ENCODE measurements at regions of chr2 and their contacts with region 1.

Region 1: DNA sequence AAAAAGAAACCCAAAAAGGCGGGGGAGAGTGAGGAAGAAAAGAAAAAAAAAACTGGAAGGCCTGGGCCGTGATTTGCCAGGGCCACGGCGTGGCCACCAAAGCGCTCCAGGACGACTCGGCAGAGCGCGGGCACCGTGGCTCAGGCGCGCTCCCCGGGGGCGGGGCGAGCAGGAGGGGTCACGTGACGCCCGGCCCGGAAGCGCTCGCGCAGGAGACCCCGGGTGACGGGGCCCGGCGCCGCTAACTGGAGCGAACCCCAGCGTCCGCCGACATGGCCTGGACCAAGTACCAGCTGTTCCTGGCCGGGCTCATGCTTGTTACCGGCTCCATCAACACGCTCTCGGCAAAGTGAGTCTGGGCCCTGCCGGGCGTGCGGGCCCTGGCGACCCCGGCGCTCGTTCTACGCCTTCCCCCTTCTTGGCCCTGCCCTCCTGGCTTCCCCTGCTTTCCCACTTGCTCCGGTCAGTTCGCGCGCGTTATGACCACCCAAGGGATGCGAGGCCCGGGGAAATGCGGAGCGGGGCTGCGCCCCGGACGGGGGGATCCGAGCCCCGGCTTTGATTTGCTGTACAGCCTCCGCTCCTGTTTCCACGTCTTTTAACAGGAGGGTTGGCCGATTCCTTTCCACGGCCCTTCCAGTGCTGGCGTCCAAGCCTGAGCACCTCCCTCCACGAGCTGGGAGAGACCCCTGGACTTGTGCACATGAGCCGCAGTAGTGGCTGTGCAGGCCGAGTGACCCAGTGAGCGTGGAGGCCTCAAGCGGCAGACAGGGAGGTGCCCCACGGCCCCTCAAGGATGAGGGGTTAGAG is at the start of gene SLC35F6:
- DNase-seq: peak; percentile 79 to 85 (median 83)
- H3K4me3 ChIP-seq: peak within 1 kb of the TSS; percentile 78
- H3K4me3 Mint-ChIP-seq: peak within 1 kb of the TSS; percentile 87 to 99 (median 93)
- H3K27ac ChIP-seq: peak within 1 kb of the TSS; percentile 88
- H3K27ac Mint-ChIP-seq: peak within 1 kb of the TSS; percentile 85 to 99 (median 96)
- H3K4me1 ChIP-seq: peaks cover 25% of the 10 kb centered on the region
- H3K4me1 Mint-ChIP-seq: peaks cover 29 to 51% (median 35%) of the 10 kb centered on the region in 3 donors
- H3K27me3 ChIP-seq: no peaks in the 10 kb centered on the region
- H3K27me3 Mint-ChIP-seq: no peaks in the 10 kb centered on the region
- total RNA-seq, gene SLC35F6: 11.5 to 12.1 TPM

Region 2: GRCh38 chr2:26782876-26783704 is 18.8 kb after region 1 on chr2:
- CTCF ChIA-PET with region 1: interaction called, 3 read pairs
- POLR2A ChIA-PET with region 1: interaction called, 10 read pairs
- DNase-seq: no peak
- H3K4me3 ChIP-seq: no peak overlapping the region
- H3K4me3 Mint-ChIP-seq: peak overlapping the region in 1 of 7 donors; percentile 12
- H3K27ac ChIP-seq: no peak overlapping the region
- H3K27ac Mint-ChIP-seq: peak overlapping the region in 2 of 8 donors; percentile 35 to 54
- H3K4me1 ChIP-seq: peaks cover 6% of the 10 kb centered on the region
- H3K4me1 Mint-ChIP-seq: peaks cover 8 to 15% (median 15%) of the 10 kb centered on the region in 3 donors
- H3K27me3 ChIP-seq: no peaks in the 10 kb centered on the region
- H3K27me3 Mint-ChIP-seq: peaks cover 3 to 8% of the 10 kb centered on the region in 2 donors

Region 3: GRCh38 chr2:26807788-26808460 is 43.6 kb after region 1 on chr2:
- CTCF ChIA-PET with region 1: no interaction called
- POLR2A ChIA-PET with region 1: no interaction called
- DNase-seq: no peak
- H3K4me3 ChIP-seq: no peak overlapping the region
- H3K4me3 Mint-ChIP-seq: no peak overlapping the region
- H3K27ac ChIP-seq: no peak overlapping the region
- H3K27ac Mint-ChIP-seq: peak overlapping the region in 2 of 8 donors; percentile 17 to 21
- H3K4me1 ChIP-seq: peaks cover 21% of the 10 kb centered on the region
- H3K4me1 Mint-ChIP-seq: peaks cover 6 to 9% (median 6%) of the 10 kb centered on the region in 3 donors
- H3K27me3 ChIP-seq: no peaks in the 10 kb centered on the region
- H3K27me3 Mint-ChIP-seq: peaks cover 6 to 25% of the 10 kb centered on the region in 2 donors

Region 4: DNA sequence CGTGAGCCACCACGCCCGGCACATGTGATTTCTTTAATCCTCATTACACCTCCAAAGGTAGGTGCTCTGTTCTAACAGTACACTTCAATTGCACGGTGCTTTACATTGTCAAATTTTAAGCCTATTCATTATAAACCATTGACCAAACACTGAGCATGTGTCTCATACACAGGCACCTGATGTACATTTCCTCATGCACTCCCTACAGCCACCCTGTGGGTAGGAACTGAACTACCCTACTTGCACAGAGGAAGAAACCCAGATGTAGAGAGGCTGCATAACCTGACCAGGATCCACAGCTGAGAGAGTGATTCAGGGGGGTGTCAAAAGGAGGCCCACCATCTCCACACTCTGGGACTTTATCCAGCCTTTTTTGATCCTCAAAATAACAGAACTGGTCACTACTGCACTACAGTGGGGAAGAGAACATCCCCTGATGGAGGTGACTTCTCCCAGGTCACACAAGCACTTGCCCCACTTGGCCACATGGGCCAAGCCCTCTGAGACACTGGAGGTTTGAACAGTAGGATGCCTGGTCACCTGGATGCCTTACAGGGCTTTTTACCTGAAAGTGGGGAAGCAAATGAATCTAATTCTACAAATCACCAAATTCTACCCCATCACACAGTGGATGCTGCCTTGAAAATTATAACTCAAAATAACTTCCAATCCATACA is 76.8 kb after region 1 on chr2:
- CTCF ChIA-PET with region 1: no interaction called
- POLR2A ChIA-PET with region 1: no interaction called
- DNase-seq: no peak
- H3K4me3 ChIP-seq: no peak overlapping the region
- H3K4me3 Mint-ChIP-seq: peak overlapping the region in 1 of 7 donors; percentile 37
- H3K27ac ChIP-seq: no peak overlapping the region
- H3K27ac Mint-ChIP-seq: no peak overlapping the region
- H3K4me1 ChIP-seq: no peaks in the 10 kb centered on the region
- H3K4me1 Mint-ChIP-seq: no peaks in the 10 kb centered on the region
- H3K27me3 ChIP-seq: peaks cover 16% of the 10 kb centered on the region
- H3K27me3 Mint-ChIP-seq: peaks cover 38 to 68% of the 10 kb centered on the region in 2 donors

Measured in CD8-positive, alpha-beta memory T cell (primary cell).